ENCODE measurements at regions of chr12 and their contacts with region 1.

Region 1: GRCh38 chr12:128969480-128970055 is 116.3 kb downstream of the GLT1D1 start:
- DNase-seq: no peak
- ATAC-seq: peak in 2 of 4 donors; percentile 62 to 79
- H3K4me3 ChIP-seq: no peak overlapping the region
- H3K27ac ChIP-seq: no peak overlapping the region
- H3K4me1 ChIP-seq: no peaks in the 10 kb centered on the region
- H3K27me3 ChIP-seq: peaks cover 0 to 55% (median 12%) of the 10 kb centered on the region in 9 donors
- CTCF ChIP-seq: peak in 7 of 12 donors; percentile 12 to 29 (median 18)
- POLR2A ChIP-seq: no peak

Region 2: DNA sequence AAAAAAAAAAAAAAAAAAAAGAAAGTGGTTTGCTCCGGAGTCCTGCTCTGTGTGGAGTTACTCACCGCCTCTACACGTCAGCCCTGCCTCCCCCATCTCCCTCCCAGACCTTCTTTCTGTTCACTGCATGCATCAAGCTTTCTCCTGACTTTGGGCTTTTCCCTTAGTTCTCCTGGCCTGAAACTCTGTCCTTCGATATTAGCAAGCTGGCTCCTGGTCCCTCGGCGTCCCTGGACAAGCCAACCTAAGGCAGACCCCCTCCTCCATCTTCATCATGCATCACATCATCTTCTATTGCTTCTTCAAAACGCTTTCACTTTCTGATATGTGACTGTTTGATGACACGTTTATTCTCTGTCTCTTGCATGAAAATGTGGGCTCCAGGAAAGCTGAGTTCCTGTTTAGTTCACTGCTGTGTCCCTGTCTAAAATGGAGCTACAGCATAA is 186.4 kb before region 1 on chr12:
- intact Hi-C with region 1: loop called in 1 of 10 experiments (anchors 10 kb)
- DNase-seq: no peak
- ATAC-seq: no peak
- H3K4me3 ChIP-seq: no peak overlapping the region
- H3K27ac ChIP-seq: no peak overlapping the region
- H3K4me1 ChIP-seq: peaks cover 0 to 8% (median 0%) of the 10 kb centered on the region in 12 donors
- H3K27me3 ChIP-seq: no peaks in the 10 kb centered on the region
- CTCF ChIP-seq: no peak
- POLR2A ChIP-seq: no peak

Measured in heart left ventricle (tissue), 16 donors.